Sciatic nerve (tissue), 2 donors: ENCODE measurements at regions of chr9 and their contacts with region 1.

Region 1: DNA sequence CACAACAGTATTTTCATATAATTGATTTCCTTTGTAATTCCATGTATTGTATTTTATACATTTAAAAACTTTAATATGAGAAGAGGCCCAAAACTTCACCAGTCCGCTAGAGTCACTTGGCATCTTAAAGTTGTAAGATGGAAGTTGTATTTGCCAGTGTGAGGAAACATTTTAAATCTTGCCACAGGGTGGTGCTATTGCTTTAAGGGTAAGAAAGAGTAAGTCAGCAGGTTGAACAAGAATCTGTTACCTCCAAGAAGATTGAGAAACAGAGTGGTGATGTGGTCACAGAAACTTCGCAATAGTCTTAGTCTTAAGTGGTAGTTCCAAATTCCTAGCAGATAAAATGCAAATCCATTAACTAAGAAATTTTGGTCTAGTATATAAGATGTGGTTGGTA is 39.8 kb upstream of the RANBP6 start:
- DNase-seq: no peak
- ATAC-seq: peak; percentile 73

Region 2: DNA sequence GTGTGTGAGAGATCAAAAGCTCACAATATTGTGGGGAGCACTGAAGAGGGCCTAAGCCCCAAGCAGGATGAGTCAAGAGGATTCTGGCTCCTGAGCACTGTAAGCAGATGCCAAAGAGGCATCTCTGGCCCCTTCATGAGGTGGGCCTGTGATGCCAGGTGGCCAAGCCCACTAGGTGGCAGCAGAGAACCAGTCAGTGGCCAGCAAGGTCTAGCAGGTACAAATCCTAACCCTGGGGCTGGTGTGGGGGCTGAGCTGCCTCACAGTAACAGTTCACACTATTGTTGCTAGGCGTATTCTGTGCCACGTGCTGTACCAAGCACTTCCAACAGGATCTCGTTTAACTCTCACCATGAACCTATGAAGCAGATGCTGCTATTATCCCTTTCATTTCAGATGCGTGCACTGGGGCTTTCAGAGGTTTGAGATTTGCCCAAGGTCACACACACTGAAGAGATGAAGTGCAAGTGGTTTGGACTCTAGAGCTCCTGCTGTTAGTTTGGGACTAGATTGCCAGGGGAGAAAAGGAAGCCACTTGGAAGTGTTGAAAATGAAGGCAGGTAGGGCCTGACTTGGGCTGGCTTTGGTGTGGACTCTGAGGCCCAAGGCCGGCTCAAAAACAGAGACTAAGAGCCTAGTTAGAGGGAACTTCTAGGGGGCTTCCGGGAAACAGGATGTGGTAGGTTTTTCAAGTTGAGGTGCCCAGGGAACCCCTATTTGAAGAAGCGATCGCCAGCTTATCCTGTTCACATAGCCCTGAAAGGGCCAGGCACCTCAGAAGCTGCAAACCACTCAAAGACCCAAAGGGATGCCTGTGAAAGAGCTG is 168.9 kb before region 1 on chr9:
- intact Hi-C with region 1: loop called (anchors 10 kb)
- DNase-seq: peak; percentile 86
- ATAC-seq: peak; percentile 81